ENCODE measurements at regions of chr14 and their contacts with region 1.

Region 1: DNA sequence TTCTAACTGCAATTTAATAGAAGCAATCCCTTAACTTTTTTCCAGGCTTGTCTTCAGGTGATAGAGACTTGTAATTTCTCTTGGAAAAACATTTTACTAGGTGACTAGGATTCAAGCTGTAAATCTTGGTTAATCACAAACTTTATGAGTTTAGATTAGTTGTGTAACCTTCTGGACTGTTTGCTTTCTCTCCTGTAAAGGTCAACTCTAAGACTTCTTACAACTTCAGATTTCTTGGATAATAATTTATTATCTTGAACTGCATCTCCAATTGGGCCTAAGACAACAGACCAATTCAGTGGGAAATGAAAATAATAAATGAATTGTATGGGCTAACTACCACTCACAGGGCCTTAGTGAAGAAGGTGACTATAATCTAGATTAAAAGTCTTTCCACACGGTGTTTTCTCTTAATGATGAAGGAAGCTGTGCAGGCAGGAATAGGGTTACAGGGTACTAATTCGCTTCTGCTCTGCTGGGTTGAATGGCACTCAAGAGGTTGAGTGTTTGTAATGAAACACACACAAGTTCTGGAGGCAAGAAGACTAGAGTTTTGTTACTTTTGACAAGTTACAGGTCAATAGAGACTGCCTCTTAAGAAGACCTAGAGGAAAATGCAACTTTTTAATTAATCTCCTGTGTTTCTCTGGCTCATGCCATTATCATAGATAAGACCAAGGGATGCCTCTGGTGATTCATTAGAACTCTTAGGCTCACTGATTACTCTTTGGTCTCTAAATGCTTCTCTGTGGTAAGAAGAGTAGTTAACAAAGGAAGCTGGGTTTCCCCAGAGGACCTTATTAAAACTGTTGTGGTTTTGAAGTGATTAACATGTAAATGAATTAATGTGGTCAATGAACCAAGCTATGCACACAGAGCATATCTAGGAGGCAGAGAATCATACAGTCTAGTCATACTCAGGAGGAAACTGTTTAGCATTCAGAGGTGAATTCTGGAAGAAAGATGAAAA is 30.0 kb upstream of the OR4E1 start:
- DNase-seq: no peak
- H3K4me3 ChIP-seq: no peak overlapping the region
- H3K27ac ChIP-seq: no peak overlapping the region
- H3K4me1 ChIP-seq: no peaks in the 10 kb centered on the region
- H3K27me3 ChIP-seq: peaks cover 6 to 8% of the 10 kb centered on the region in 2 experiments
- CTCF ChIP-seq: no peak
- POLR2A ChIP-seq: no peak

Region 2: DNA sequence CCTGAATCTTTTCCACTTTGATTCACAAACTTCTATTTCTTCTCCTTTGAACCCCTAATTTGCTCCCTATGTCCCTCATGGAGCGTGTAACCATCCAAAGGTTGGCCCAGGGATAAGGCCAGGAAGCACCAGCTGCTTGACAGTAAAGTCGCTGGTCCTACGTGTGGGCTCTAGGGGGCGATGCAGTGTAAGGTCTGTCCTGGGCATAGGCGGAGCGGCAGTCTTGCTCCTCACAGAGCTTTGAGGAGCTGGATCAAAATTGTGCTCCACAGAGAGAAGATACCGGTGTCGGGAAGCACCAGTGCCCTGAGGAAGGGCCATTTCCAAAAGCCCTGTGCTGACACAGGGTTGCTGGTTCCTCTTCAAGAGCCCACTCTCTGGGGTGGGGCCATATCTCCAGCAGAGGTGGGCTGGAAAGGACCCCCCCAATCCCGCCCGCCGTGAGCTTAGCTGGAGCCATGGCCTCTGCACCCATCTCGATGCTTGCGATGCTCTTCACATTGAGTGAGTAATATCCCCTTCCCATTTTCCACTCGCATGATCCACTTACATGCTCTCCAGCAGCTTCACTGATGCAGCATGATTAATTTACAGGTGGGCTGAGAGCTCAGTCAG is 19.9 kb after region 1 on chr14:
- CTCF ChIA-PET with region 1: interaction called, 3 read pairs
- POLR2A ChIA-PET with region 1: no interaction called
- dilution Hi-C with region 1: no loop called
- intact Hi-C with region 1: loop called (anchors 1 kb)
- DNase-seq: no peak
- H3K4me3 ChIP-seq: no peak overlapping the region
- H3K27ac ChIP-seq: no peak overlapping the region
- H3K4me1 ChIP-seq: no peaks in the 10 kb centered on the region
- H3K27me3 ChIP-seq: peaks cover 6 to 9% of the 10 kb centered on the region in 2 experiments
- CTCF ChIP-seq: peak; percentile 29 to 42
- POLR2A ChIP-seq: no peak